Mammary epithelial cell (primary cell): ENCODE measurements at regions of chr16 and their contacts with region 1.

Region 1: DNA sequence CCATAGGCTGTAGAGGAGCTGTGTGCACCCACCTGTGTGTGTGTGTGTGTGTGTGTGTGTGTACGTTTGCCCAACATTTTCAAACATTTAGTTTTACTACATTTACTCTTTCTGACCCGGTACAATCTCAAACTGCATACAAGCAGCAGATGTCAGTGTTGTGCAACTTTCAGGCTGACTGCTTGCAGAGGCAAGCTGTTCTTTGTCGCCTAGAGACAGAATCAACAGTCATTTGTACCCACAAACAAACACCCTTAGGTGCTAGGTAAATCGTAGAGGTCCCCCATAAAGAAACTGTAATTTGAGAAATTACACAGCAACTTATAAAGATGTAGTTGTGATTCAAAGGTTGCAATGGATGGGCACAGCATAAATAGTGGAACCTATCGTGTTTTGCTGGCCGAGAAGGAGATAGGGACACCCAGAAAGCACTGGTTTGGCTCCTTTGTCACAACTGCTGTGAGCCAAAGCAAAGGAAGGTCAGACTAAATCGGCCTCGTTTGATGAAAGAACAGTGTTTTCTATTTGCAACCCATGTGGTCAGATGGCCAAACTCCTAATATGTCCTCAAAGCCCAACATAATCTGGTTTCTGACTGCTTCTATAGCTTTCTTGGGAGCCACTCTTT is 478.4 kb downstream of the TOX3 start:
- DNase-seq: peak; percentile 10
- H3K4me3 ChIP-seq: no peak overlapping the region
- H3K27ac ChIP-seq: no peak overlapping the region
- H3K4me1 ChIP-seq: no peaks in the 10 kb centered on the region
- H3K27me3 ChIP-seq: no peaks in the 10 kb centered on the region
- CTCF ChIP-seq: peak; percentile 13 to 43

Region 2: DNA sequence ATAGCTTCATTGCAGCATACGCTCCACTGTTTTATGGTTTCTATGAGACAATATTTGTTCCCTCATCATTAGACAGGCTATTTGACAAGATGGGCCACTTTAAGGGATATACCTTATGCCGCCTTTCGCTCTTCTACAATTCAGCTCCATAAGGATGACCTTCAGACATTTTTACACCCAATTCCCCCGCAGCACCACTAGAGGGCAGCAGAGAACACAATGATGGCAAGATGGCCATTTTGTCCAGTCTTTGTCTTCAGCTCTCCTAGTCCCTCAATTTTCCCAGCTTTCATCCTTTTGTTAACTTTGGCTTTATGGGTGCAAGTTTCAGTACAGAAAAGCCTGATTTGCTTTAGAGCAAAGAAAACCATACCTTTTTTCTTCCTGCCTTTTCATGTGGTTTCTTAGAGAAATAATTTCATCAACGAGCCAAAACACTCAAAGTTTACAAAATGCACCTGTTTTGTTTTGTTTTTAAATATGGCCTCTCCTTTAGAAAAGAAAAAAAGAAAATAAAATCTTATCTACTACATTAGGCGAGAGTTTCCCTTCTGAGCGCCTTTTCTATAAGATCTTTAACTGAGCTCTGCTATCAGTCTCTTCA is 123.1 kb after region 1 on chr16:
- CTCF ChIA-PET with region 1: interaction called, 4 read pairs
- dilution Hi-C with region 1: no loop called
- in situ Hi-C with region 1: no loop called
- intact Hi-C with region 1: loop called (anchors 1 kb)
- DNase-seq: peak; percentile 41
- H3K4me3 ChIP-seq: no peak overlapping the region
- H3K27ac ChIP-seq: no peak overlapping the region
- H3K4me1 ChIP-seq: no peaks in the 10 kb centered on the region
- H3K27me3 ChIP-seq: no peaks in the 10 kb centered on the region
- CTCF ChIP-seq: peak; percentile 90 to 95

Region 3: GRCh38 chr16:52861614-52862022 is 793.1 kb after region 1 on chr16:
- CTCF ChIA-PET with region 1: interaction called, 3 read pairs
- dilution Hi-C with region 1: no loop called
- in situ Hi-C with region 1: no loop called
- intact Hi-C with region 1: loop called (anchors 2 kb)
- DNase-seq: peak; percentile 5
- H3K4me3 ChIP-seq: no peak overlapping the region
- H3K27ac ChIP-seq: no peak overlapping the region
- H3K4me1 ChIP-seq: no peaks in the 10 kb centered on the region
- H3K27me3 ChIP-seq: peaks cover 3% of the 10 kb centered on the region
- CTCF ChIP-seq: peak; percentile 31 to 46

Region 4: GRCh38 chr16:52912565-52913173 is 844.1 kb after region 1 on chr16:
- CTCF ChIA-PET with region 1: no interaction called
- dilution Hi-C with region 1: no loop called
- in situ Hi-C with region 1: no loop called
- intact Hi-C with region 1: loop called (anchors 1 kb)
- DNase-seq: peak; percentile 43
- H3K4me3 ChIP-seq: no peak overlapping the region
- H3K27ac ChIP-seq: no peak overlapping the region
- H3K4me1 ChIP-seq: no peaks in the 10 kb centered on the region
- H3K27me3 ChIP-seq: no peaks in the 10 kb centered on the region
- CTCF ChIP-seq: peak; percentile 87 to 89

Region 5: DNA sequence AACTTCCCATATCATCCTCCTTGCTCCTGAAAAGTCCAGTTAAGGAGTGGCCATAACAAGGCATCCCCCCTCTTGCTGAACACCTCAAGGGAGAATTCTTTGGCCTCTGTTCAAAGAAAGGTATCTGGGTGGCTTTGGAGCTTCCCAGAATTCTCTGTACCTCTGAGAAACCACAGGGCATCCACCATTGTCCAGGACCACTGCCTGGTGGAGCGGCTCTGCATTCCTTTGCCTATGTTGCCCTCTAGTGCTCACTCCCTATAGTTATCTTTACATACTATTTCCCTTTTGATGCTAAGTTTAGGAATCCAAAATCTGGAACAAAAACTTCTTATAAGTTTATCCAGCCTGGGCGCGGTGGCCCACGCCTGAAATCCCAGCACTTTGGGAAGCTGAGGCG is 953.8 kb after region 1 on chr16:
- CTCF ChIA-PET with region 1: no interaction called
- dilution Hi-C with region 1: no loop called
- in situ Hi-C with region 1: no loop called
- intact Hi-C with region 1: loop called (anchors 1 kb)
- DNase-seq: peak; percentile 36
- H3K4me3 ChIP-seq: no peak overlapping the region
- H3K27ac ChIP-seq: no peak overlapping the region
- H3K4me1 ChIP-seq: peaks cover 4% of the 10 kb centered on the region
- H3K27me3 ChIP-seq: no peaks in the 10 kb centered on the region
- CTCF ChIP-seq: peak; percentile 51 to 62